Lower leg skin (tissue), 4 donors: ENCODE measurements at regions of chr9 and their contacts with region 1.

Region 1: GRCh38 chr9:115013998-115014397 is 83.6 kb upstream of the TNFSF8 start:
- DNase-seq: no peak
- H3K4me3 ChIP-seq: no peak overlapping the region
- CTCF ChIP-seq: peak in 1 of 3 donors; percentile 60
- POLR2A ChIP-seq: no peak

Region 2: DNA sequence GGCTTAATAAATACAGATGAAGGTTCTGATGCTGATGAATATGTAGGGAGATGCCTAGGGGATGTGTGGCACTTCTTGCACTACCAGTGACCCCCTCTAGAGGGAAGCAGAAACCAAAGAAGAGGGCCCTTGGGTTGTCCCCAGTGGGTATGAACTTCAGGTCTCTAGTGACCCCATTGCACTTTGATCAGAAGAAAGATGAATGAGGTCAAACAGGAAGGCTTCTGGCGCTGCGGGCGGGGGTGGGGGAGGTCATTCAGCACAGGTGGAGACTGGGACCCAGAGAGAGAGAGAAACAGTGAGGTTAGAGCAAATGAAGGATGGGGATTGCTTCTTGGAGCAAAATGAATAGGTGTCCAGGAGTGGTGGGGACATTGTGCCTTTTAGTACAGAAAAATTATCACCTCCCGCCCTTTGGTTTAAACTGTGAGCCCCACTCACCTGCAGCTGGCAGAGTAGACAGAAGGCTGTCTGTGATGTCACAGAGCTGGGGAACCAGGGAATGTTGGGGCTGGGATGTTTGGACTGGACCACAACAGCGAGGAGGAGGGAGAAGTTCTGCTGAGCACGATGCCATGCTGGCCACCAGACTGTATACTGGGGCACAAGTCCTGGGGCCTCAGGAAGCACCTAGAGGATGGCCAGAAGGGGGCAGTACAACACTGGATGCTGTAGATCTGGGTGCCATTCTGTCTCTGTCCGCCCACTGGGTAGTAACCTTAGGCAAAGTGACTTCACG is 332.2 kb before region 1 on chr9 and contains the start of gene TEX48:
- intact Hi-C with region 1: loop called (anchors 10 kb)
- DNase-seq: peak in 1 of 2 donors; percentile 23
- H3K4me3 ChIP-seq: no peak within 1 kb of the TSS
- CTCF ChIP-seq: peak in 1 of 3 donors; percentile 9
- POLR2A ChIP-seq: no peak
- total RNA-seq, gene TEX48: not detected

Region 3: GRCh38 chr9:114738581-114739316 is 275.2 kb before region 1 on chr9:
- intact Hi-C with region 1: loop called (anchors 5 kb)
- DNase-seq: peak; percentile 76 to 94
- H3K4me3 ChIP-seq: no peak overlapping the region
- CTCF ChIP-seq: peak in 1 of 3 donors; percentile 85
- POLR2A ChIP-seq: no peak

Region 4: GRCh38 chr9:114906908-114907571 is 107.0 kb before region 1 on chr9:
- intact Hi-C with region 1: loop called (anchors 10 kb)
- DNase-seq: no peak
- H3K4me3 ChIP-seq: no peak overlapping the region
- CTCF ChIP-seq: no peak
- POLR2A ChIP-seq: no peak